Caco-2 (cell line): ENCODE measurements at regions of chr12 and their contacts with region 1.

Region 1: DNA sequence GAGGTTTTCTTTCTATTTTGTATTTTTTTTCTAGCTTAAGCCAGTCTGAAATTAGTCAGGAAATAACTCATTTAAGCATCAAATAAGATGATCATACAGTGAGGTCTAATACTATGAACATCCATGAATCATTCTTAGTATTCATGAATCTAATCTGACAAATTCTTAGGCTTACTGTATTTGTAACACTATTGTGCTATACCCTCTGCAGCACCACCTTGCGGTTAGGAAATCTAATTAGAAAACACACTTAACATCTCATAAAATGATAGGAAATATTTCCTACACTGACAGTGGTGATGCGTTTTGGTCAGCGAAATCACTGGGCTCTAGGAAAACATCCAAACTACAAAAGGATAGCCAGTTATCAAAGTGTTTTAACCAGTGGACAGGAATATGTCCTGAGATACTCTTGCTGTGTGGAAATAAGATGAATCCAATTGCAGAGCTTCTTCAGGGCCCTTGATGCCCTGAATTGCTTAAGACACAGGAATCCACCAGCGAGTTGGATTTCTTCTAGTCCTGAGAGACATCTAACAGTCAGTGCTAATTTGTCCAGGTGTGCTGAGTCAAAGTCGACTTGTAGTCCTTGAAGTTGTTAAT is 109.3 kb upstream of the MYF6 start:
- DNase-seq: peak in 1 of 2 experiments; percentile 18
- H3K4me3 ChIP-seq: no peak overlapping the region
- H3K4me3 Mint-ChIP-seq: no peak overlapping the region
- H3K27ac Mint-ChIP-seq: no peak overlapping the region
- H3K4me1 ChIP-seq: 0 out of 2 replicates have a peak, but pooled peaks cover 4% of the 10 kb centered on the region
- H3K4me1 Mint-ChIP-seq: peaks cover 10% of the 10 kb centered on the region
- H3K27me3 ChIP-seq: no peaks in the 10 kb centered on the region
- H3K27me3 Mint-ChIP-seq: peaks cover 4% of the 10 kb centered on the region
- CTCF ChIP-seq: peak; percentile 48 to 52

Region 2: GRCh38 chr12:80472902-80473500 is 125.1 kb before region 1 on chr12:
- CTCF ChIA-PET with region 1: interaction called, 3 read pairs
- POLR2A ChIA-PET with region 1: no interaction called
- intact Hi-C with region 1: loop called (anchors 1 kb)
- DNase-seq: peak in 1 of 2 experiments; percentile 38
- H3K4me3 ChIP-seq: no peak overlapping the region
- H3K4me3 Mint-ChIP-seq: no peak overlapping the region
- H3K27ac Mint-ChIP-seq: no peak overlapping the region
- H3K4me1 ChIP-seq: no peaks in the 10 kb centered on the region
- H3K4me1 Mint-ChIP-seq: no peaks in the 10 kb centered on the region
- H3K27me3 ChIP-seq: no peaks in the 10 kb centered on the region
- H3K27me3 Mint-ChIP-seq: no peaks in the 10 kb centered on the region
- CTCF ChIP-seq: peak in 1 of 2 experiments; percentile 56